ENCODE measurements at regions of chr15 and their contacts with region 1.

Region 1: GRCh38 chr15:90320061-90320884 is 31.8 kb upstream of the ZNF774 start:
- DNase-seq: peak; percentile 36 to 93
- H3K4me3 ChIP-seq: peak overlapping the region in 1 of 2 donors; percentile 38
- H3K27ac ChIP-seq: peak overlapping the region; percentile 44 to 65
- H3K4me1 ChIP-seq: peaks cover 8 to 10% of the 10 kb centered on the region in 2 donors
- H3K27me3 ChIP-seq: no peaks in the 10 kb centered on the region
- CTCF ChIP-seq: peak; percentile 97 to 98 (median 98)

Region 2: GRCh38 chr15:89812011-89812835 is 508.1 kb before region 1 on chr15:
- intact Hi-C with region 1: no loop called
- DNase-seq: peak; percentile 28 to 77
- H3K4me3 ChIP-seq: no peak overlapping the region
- H3K27ac ChIP-seq: no peak overlapping the region
- H3K4me1 ChIP-seq: peaks cover 0 to 5% of the 10 kb centered on the region in 2 donors
- H3K27me3 ChIP-seq: peaks cover 12% of the 10 kb centered on the region
- CTCF ChIP-seq: no peak

Region 3: GRCh38 chr15:90291679-90292356 is 28.5 kb before region 1 on chr15:
- intact Hi-C with region 1: loop called (anchors 2 kb)
- DNase-seq: no peak
- H3K4me3 ChIP-seq: no peak overlapping the region
- H3K27ac ChIP-seq: no peak overlapping the region
- H3K4me1 ChIP-seq: peaks cover 0 to 17% of the 10 kb centered on the region in 2 donors
- H3K27me3 ChIP-seq: no peaks in the 10 kb centered on the region
- CTCF ChIP-seq: no peak

Region 4: DNA sequence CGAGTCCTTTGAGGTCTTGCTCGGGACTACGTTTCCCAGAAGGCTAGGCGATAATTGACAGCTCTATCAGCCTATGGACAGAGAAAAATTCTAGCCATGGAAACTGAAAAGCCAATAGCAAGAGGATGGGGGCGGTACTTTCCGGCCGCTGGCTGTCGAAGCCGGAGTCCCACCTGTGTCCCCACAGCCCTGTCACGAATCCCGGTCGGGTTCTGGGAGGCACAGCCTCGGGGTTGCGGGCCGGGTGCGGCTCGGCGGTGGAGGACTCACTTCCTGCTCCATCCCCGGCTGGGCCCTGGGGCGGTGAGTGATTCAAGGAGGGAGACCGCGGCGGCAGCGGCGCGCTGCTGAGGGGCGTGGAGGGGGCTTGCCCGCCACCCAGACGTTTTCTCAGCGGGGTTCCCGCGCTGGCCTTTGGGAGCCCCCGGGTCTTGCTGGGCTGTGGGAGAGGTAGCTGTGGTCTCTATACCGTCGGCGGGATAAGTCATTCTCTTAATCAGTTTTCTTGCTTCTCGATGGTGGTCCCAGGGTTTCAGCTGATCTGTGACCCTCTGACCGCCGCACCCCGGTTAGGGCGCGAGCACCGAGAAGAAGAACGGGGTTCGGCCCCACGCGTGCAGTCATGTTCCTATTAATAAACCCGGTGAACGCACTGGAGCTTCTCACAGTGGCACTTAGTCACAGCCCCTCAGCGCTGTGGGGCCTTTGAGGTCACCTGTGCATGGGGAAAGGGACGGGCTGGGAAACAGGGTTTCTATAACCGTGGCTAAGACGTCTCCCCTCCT is 32.0 kb after region 1 on chr15 and contains the start of gene ZNF774:
- intact Hi-C with region 1: loop called (anchors 2 kb)
- DNase-seq: peak; percentile 84 to 96
- H3K4me3 ChIP-seq: peak within 1 kb of the TSS; percentile 59 to 94
- H3K27ac ChIP-seq: peak within 1 kb of the TSS; percentile 45 to 87
- H3K4me1 ChIP-seq: no peaks in the 10 kb centered on the region
- H3K27me3 ChIP-seq: no peaks in the 10 kb centered on the region
- CTCF ChIP-seq: no peak
- total RNA-seq, gene ZNF774: 0.21 TPM

Region 5: GRCh38 chr15:90362936-90363212 is 42.6 kb after region 1 on chr15:
- intact Hi-C with region 1: loop called (anchors 1 kb)
- DNase-seq: no peak
- H3K4me3 ChIP-seq: no peak overlapping the region
- H3K27ac ChIP-seq: peak overlapping the region in 1 of 2 donors; percentile 90
- H3K4me1 ChIP-seq: peaks cover 4 to 28% of the 10 kb centered on the region in 2 donors
- H3K27me3 ChIP-seq: no peaks in the 10 kb centered on the region
- CTCF ChIP-seq: no peak

Region 6: DNA sequence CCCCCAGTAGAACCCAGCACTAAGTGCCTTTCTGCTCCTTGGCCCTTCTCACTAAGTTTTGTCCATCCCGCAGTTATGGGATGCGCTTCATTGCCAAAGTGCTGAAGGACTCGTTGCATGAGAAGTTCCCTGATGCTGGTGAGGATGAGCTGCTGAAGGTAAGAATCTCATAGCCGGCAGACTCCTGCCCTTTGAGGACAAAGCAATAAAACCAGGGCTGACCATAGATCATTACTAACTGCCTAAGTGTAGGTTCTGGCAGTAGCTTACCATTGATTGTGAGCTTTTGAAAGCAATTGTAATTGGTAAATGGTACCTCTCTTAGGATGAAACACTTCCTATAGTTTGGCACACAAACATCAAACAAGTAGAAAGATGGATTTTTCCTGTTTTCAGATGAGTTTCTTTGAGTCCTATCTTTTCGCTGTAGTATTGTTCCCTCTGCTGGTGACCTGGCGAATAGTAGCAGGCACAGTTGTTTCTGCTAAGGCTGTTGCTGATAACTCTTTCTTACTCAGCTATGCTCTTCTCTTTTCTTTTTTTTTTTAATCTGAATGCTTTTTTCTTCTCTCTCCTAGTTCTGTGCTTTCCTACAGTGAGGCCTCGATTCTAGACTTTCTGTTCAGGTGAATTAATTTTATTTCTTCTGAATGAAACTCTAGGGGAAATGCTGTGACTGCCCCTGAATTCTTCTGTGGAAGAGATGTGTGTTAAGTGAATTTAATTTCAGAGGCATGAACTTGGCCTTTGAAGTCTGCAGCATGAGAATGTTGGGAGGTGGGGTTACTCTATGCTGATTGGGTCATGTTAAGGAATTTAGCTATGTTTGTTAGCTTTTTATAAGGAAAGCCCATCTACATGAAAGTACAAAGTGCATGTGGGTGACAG is 162.1 kb after region 1 on chr15:
- intact Hi-C with region 1: loop called (anchors 1 kb)
- DNase-seq: no peak
- H3K4me3 ChIP-seq: no peak overlapping the region
- H3K27ac ChIP-seq: peak overlapping the region; percentile 47 to 49
- H3K4me1 ChIP-seq: peaks cover 0 to 4% of the 10 kb centered on the region in 2 donors
- H3K27me3 ChIP-seq: no peaks in the 10 kb centered on the region
- CTCF ChIP-seq: peak; percentile 61 to 76 (median 62)

Region 7: DNA sequence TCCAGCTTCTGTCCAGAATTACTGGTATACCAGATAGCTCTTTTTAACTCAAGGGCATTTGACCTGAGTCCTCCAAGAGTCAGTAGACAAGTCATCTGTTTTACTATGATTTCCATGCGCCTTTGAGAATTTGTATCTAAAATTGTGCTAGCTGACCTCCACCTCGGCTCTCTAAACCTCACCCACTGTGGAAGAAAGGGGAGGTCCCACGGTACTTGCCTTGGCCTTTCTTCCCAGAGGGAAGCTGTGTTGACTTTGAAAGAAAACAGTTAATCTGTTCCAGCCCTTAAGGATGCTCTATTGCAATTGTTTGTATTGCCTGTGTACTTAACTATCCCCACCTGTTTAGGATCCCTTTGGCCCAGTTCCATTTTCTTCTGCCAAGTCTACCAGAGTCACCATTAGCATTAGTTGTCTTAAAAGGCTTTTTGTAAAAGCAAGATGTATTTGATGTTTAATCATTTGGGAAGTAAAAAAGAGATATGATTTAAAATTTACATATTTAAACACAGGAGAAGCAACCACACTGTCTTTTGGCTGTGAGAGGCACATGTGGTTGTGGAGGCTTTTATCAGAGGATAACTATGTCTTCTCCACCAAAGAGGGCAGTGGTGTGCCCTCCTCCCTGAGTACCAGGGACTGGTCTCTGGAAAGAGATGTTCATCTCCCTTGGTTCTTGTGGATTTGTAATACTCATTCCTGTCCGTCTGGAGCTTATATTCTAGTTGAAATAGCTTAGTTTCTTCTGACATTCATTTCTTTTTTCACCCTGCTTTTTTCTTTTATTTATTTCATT is 298.3 kb after region 1 on chr15:
- intact Hi-C with region 1: loop called (anchors 10 kb)
- DNase-seq: no peak
- H3K4me3 ChIP-seq: no peak overlapping the region
- H3K27ac ChIP-seq: no peak overlapping the region
- H3K4me1 ChIP-seq: peaks cover 0 to 2% of the 10 kb centered on the region in 2 donors
- H3K27me3 ChIP-seq: no peaks in the 10 kb centered on the region
- CTCF ChIP-seq: no peak

Measured in ascending aorta (tissue), 2 donors.